PC-9 (cell line): ENCODE measurements at regions of chr11 and their contacts with region 1.

Region 1: GRCh38 chr11:96098514-96099241 is 174.8 kb upstream of the MTMR2 start:
- DNase-seq: peak; percentile 64 to 99
- H3K4me3 ChIP-seq: peak overlapping the region; percentile 38; the same call in 1 of the 2 replicates
- H3K27ac ChIP-seq: peak overlapping the region; percentile 98
- H3K4me1 ChIP-seq: peaks cover 93% of the 10 kb centered on the region
- H3K27me3 ChIP-seq: no peaks in the 10 kb centered on the region
- CTCF ChIP-seq: no peak

Region 2: GRCh38 chr11:95991545-95991944 is 107.1 kb before region 1 on chr11:
- CTCF ChIA-PET with region 1: no interaction called
- POLR2A ChIA-PET with region 1: no interaction called
- intact Hi-C with region 1: loop called (anchors 5 kb)
- DNase-seq: peak in 1 of 2 experiments; percentile 56
- H3K4me3 ChIP-seq: no peak overlapping the region
- H3K27ac ChIP-seq: peak overlapping the region; percentile 75
- H3K4me1 ChIP-seq: peaks cover 30% of the 10 kb centered on the region
- H3K27me3 ChIP-seq: no peaks in the 10 kb centered on the region
- CTCF ChIP-seq: no peak

Region 3: DNA sequence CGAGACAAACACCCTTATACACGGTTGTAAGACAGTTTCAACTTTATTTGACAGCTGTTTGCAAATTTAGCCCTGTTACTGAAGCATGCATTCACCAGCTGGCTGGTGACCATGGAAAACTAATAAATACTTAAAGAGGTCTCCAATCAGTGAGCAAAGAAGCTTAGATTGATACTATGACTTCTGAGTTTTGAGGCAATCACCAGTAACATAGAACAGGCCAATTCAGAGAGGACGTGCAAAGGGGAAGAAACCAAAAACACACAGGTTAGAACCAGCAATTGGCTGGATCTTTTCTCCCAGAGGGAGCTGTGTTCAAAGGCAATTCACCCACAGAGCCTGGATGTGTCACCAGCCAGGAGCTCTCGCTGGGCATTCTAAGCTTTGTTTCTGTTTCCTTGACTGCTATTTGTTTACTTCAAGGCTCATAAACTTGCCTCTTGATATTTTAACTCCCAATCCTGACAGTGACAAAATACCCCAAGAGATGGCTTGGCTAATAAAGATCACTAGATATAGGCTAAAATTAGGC is 61.2 kb before region 1 on chr11:
- CTCF ChIA-PET with region 1: no interaction called
- POLR2A ChIA-PET with region 1: interaction called, 4 read pairs
- intact Hi-C with region 1: loop called (anchors 1 kb)
- DNase-seq: peak; percentile 66 to 100
- H3K4me3 ChIP-seq: peak overlapping the region; percentile 38; the same call in 1 of the 2 replicates
- H3K27ac ChIP-seq: peak overlapping the region; percentile 95
- H3K4me1 ChIP-seq: peaks cover 79% of the 10 kb centered on the region
- H3K27me3 ChIP-seq: no peaks in the 10 kb centered on the region
- CTCF ChIP-seq: no peak

Region 4: GRCh38 chr11:96050435-96051182 is 48.1 kb before region 1 on chr11:
- CTCF ChIA-PET with region 1: no interaction called
- POLR2A ChIA-PET with region 1: no interaction called
- intact Hi-C with region 1: no loop called
- DNase-seq: peak in 1 of 2 experiments; percentile 84
- H3K4me3 ChIP-seq: no peak overlapping the region
- H3K27ac ChIP-seq: no peak overlapping the region
- H3K4me1 ChIP-seq: peaks cover 56% of the 10 kb centered on the region
- H3K27me3 ChIP-seq: no peaks in the 10 kb centered on the region
- CTCF ChIP-seq: no peak

Region 5: GRCh38 chr11:96134602-96135001 is 35.9 kb after region 1 on chr11:
- CTCF ChIA-PET with region 1: interaction called, 7 read pairs
- POLR2A ChIA-PET with region 1: no interaction called
- intact Hi-C with region 1: loop called (anchors 1 kb)
- DNase-seq: peak in 1 of 2 experiments; percentile 83
- H3K4me3 ChIP-seq: no peak overlapping the region
- H3K27ac ChIP-seq: peak overlapping the region; percentile 5; the same call in 1 of the 2 replicates
- H3K4me1 ChIP-seq: peaks cover 26% of the 10 kb centered on the region
- H3K27me3 ChIP-seq: no peaks in the 10 kb centered on the region
- CTCF ChIP-seq: no peak

Region 6: DNA sequence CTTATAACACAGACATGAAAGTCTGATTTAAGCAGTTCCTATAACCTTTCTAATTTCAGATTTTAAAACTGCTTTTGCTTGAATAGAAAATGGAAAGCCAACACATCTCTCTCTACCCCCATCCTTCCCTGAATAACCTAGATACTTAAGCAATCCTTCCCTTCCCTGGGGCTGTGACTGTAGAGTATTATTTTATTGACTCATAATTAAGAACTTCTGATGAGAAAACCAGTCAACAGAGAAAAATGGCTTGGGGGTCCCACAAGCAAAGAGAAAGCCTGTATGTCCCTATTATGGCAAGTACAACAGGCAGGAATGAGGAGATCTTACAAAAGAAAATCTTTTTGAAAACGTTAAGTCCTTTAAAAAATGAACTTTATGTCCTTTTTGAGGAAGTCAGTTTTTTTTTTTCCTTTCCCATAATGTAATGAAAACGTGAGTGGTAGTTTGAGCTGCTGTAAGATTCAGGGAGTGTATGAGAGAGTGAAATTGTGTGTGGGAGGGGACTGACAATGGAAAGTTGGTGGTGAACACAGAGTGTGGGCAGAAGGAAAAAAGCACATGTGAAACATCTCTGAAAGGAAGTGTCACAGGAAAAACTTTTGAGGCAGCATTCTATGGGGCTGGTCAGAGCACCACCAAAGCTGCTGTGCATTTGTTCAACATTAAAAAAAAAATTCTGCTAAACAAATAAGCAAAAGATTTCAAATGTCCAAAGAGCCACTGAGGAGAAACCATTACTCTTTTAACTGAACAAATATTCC is 89.7 kb after region 1 on chr11:
- CTCF ChIA-PET with region 1: no interaction called
- POLR2A ChIA-PET with region 1: no interaction called
- intact Hi-C with region 1: loop called (anchors 1 kb)
- DNase-seq: peak in 1 of 2 experiments; percentile 86
- H3K4me3 ChIP-seq: peak overlapping the region; percentile 8; the same call in 1 of the 2 replicates
- H3K27ac ChIP-seq: peak overlapping the region; percentile 91
- H3K4me1 ChIP-seq: peaks cover 52% of the 10 kb centered on the region
- H3K27me3 ChIP-seq: no peaks in the 10 kb centered on the region
- CTCF ChIP-seq: no peak

Region 7: DNA sequence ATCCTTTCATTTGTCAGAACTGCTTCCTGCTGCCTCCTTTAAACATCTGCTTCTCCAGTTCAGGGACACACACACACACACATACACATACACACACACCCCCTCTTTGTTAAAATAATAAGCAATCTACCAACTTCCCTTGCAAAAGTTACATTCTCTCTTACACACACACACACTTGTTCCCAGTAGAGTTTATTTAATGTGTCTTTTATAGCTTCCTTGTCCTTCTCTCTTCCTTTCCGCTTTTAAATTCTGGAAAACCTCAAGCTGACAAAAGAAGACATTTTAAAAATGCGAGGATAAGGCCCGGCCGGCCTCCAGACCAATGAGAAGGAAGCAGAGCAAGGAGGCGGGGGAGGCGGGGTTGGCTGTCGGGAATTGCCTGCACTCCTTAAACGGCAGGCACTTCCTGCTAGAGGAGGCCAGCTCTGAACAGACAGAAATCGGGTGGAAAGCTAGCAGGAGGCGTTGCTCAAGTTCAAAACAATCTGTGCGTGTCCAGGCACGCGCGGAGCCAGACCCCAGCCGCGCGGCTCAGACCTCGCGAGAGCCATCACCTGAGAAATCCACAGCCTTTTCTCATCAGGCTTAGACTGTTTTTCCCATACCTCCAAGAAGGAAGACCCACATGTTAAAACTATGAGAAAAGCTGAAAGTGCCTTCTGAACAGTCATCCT is 144.4 kb after region 1 on chr11:
- CTCF ChIA-PET with region 1: no interaction called
- POLR2A ChIA-PET with region 1: no interaction called
- intact Hi-C with region 1: loop called (anchors 1 kb)
- DNase-seq: peak; percentile 91 to 97
- H3K4me3 ChIP-seq: peak overlapping the region; percentile 55
- H3K27ac ChIP-seq: peak overlapping the region; percentile 94
- H3K4me1 ChIP-seq: peaks cover 61% of the 10 kb centered on the region
- H3K27me3 ChIP-seq: no peaks in the 10 kb centered on the region
- CTCF ChIP-seq: no peak

Region 8: GRCh38 chr11:96279018-96279895 is 180.6 kb after region 1 on chr11:
- CTCF ChIA-PET with region 1: no interaction called
- POLR2A ChIA-PET with region 1: no interaction called
- intact Hi-C with region 1: no loop called
- DNase-seq: peak; percentile 33 to 80
- H3K4me3 ChIP-seq: no peak overlapping the region
- H3K27ac ChIP-seq: peak overlapping the region; percentile 78
- H3K4me1 ChIP-seq: peaks cover 57% of the 10 kb centered on the region
- H3K27me3 ChIP-seq: no peaks in the 10 kb centered on the region
- CTCF ChIP-seq: no peak

Region 9: GRCh38 chr11:96316869-96317268 is 218.2 kb after region 1 on chr11:
- CTCF ChIA-PET with region 1: no interaction called
- POLR2A ChIA-PET with region 1: no interaction called
- intact Hi-C with region 1: no loop called
- DNase-seq: no peak
- H3K4me3 ChIP-seq: no peak overlapping the region
- H3K27ac ChIP-seq: peak overlapping the region; percentile 96
- H3K4me1 ChIP-seq: peaks cover 80% of the 10 kb centered on the region
- H3K27me3 ChIP-seq: no peaks in the 10 kb centered on the region
- CTCF ChIP-seq: no peak